Panc1 (cell line): ENCODE measurements at regions of chr6 and their contacts with region 1.

Region 1: DNA sequence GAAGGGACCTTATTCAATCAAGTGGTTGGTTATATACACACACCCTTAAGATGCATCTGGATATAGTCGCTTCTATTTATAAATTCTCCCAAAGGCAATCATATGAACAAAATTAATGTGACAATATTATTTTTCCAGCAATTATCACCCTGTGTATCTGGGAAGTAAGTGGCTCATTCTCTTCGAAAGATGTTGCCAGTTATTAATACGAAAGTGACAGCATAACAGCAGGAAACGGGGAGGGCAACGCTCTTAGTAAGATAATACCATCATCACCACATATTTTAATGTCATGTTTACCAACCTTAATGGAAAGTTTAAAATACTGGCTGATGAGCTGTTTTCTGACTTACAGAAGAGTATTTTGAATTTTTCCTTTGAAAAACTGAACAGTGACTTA is 697.2 kb upstream of the AGPAT4 start:
- DNase-seq: no peak
- ATAC-seq: no peak
- H3K4me3 ChIP-seq: no peak overlapping the region
- H3K27ac ChIP-seq: no peak overlapping the region
- H3K4me1 ChIP-seq: no peaks in the 10 kb centered on the region
- H3K27me3 ChIP-seq: no peaks in the 10 kb centered on the region
- CTCF ChIP-seq: no peak

Region 2: GRCh38 chr6:161882196-161882765 is 88.8 kb before region 1 on chr6:
- CTCF ChIA-PET with region 1: no interaction called
- POLR2A ChIA-PET with region 1: interaction called, 13 read pairs
- in situ Hi-C with region 1: no loop called
- intact Hi-C with region 1: no loop called
- DNase-seq: no peak
- ATAC-seq: no peak
- H3K4me3 ChIP-seq: no peak overlapping the region
- H3K27ac ChIP-seq: no peak overlapping the region
- H3K4me1 ChIP-seq: no peaks in the 10 kb centered on the region
- H3K27me3 ChIP-seq: no peaks in the 10 kb centered on the region
- CTCF ChIP-seq: no peak

Region 3: GRCh38 chr6:161940519-161940918 is 30.5 kb before region 1 on chr6:
- CTCF ChIA-PET with region 1: no interaction called
- POLR2A ChIA-PET with region 1: no interaction called
- in situ Hi-C with region 1: no loop called
- intact Hi-C with region 1: no loop called
- DNase-seq: no peak
- ATAC-seq: no peak
- H3K4me3 ChIP-seq: no peak overlapping the region
- H3K27ac ChIP-seq: no peak overlapping the region
- H3K4me1 ChIP-seq: no peaks in the 10 kb centered on the region
- H3K27me3 ChIP-seq: no peaks in the 10 kb centered on the region
- CTCF ChIP-seq: no peak

Region 4: GRCh38 chr6:161984713-161985112 is 13.7 kb after region 1 on chr6:
- CTCF ChIA-PET with region 1: no interaction called
- POLR2A ChIA-PET with region 1: interaction called, 18 read pairs
- in situ Hi-C with region 1: no loop called
- intact Hi-C with region 1: no loop called
- DNase-seq: no peak
- ATAC-seq: no peak
- H3K4me3 ChIP-seq: no peak overlapping the region
- H3K27ac ChIP-seq: no peak overlapping the region
- H3K4me1 ChIP-seq: no peaks in the 10 kb centered on the region
- H3K27me3 ChIP-seq: no peaks in the 10 kb centered on the region
- CTCF ChIP-seq: no peak

Region 5: GRCh38 chr6:161996783-161997182 is 25.7 kb after region 1 on chr6:
- CTCF ChIA-PET with region 1: no interaction called
- POLR2A ChIA-PET with region 1: no interaction called
- in situ Hi-C with region 1: no loop called
- intact Hi-C with region 1: no loop called
- DNase-seq: no peak
- ATAC-seq: no peak
- H3K4me3 ChIP-seq: no peak overlapping the region
- H3K27ac ChIP-seq: no peak overlapping the region
- H3K4me1 ChIP-seq: no peaks in the 10 kb centered on the region
- H3K27me3 ChIP-seq: no peaks in the 10 kb centered on the region
- CTCF ChIP-seq: no peak

Region 6: DNA sequence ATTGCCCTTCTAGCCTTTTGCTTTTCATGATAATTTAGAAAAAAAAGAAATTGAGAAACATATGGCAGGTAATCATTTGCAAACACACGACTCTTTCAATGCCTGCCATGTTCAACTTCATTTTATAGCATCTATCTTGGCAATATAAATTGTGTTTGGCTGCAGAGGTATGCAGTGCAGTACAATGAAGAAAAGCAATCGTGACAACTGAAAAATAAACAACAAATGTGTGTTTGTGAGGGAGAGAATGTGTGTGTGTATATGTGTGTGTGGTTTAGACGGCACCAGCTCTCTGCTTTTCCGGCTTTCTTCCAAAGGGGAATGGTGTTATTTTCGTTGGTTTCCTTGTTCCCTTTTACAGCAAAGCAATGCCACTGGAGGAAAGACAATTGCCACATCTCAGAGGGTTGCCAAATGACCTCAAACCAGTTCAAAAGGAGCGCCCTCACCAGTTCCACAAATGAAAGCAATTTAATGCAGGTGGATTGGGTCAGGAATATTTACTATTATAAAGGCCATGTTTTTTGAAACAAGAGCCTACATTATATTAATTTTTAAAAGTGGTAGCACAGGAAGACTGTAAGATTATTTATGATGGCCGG is 169.3 kb after region 1 on chr6:
- CTCF ChIA-PET with region 1: no interaction called
- POLR2A ChIA-PET with region 1: no interaction called
- in situ Hi-C with region 1: no loop called
- intact Hi-C with region 1: no loop called
- DNase-seq: no peak
- ATAC-seq: no peak
- H3K4me3 ChIP-seq: no peak overlapping the region
- H3K27ac ChIP-seq: no peak overlapping the region
- H3K4me1 ChIP-seq: no peaks in the 10 kb centered on the region
- H3K27me3 ChIP-seq: no peaks in the 10 kb centered on the region
- CTCF ChIP-seq: no peak

Region 7: GRCh38 chr6:162706232-162706631 is 735.2 kb after region 1 on chr6:
- CTCF ChIA-PET with region 1: no interaction called
- POLR2A ChIA-PET with region 1: no interaction called
- in situ Hi-C with region 1: no loop called
- intact Hi-C with region 1: no loop called
- DNase-seq: no peak
- ATAC-seq: no peak
- H3K4me3 ChIP-seq: no peak overlapping the region
- H3K27ac ChIP-seq: no peak overlapping the region
- H3K4me1 ChIP-seq: no peaks in the 10 kb centered on the region
- H3K27me3 ChIP-seq: no peaks in the 10 kb centered on the region
- CTCF ChIP-seq: no peak